ENCODE measurements at regions of chr7 and their contacts with region 1.

Region 1: DNA sequence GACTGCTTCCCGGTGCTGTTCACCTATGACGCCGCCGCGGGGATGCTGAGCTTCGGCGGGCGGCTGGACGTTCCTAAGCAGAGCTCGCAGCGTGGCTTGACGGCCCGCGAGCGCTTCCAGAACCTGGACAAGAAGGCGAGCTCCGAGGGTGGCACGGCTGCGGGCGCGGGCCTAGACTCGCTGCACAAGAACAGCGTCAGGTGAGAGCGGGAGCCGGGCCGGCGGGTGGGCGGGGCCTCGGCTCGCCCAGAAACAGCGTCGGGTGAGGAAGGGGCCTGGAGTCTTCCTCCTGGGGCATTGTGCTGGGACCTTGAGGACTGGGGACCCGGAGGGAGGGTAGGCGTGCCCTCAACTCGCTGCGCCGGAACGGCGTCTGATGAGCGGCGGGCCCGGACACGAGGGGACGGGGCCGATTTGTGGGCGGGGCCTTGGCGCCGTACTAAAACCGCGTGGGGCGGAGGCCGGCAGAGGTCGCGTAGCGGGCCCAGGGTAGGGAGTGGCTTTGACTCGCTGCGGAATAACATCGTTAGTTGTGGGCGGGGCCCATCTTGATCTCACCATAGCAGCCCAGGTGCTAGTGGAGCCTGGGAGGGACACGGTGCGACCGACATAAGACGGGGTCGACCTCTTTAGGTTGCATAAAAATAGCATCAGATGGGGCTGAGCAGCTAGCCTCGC is 15.6 kb downstream of the PDAP1 start:
- DNase-seq: peak; percentile 79
- H3K4me3 Mint-ChIP-seq: peak overlapping the region; percentile 63
- H3K27ac Mint-ChIP-seq: peak overlapping the region; percentile 85
- H3K4me1 Mint-ChIP-seq: peaks cover 20% of the 10 kb centered on the region
- H3K27me3 Mint-ChIP-seq: no peaks in the 10 kb centered on the region

Region 2: GRCh38 chr7:99374103-99375064 is 18.4 kb before region 1 on chr7 and contains the start of gene ARPC1B:
- CTCF ChIA-PET with region 1: no interaction called
- intact Hi-C with region 1: loop called (anchors 2 kb)
- DNase-seq: peak; percentile 88
- H3K4me3 Mint-ChIP-seq: peak within 1 kb of the TSS; percentile 79
- H3K27ac Mint-ChIP-seq: peak within 1 kb of the TSS; percentile 87
- H3K4me1 Mint-ChIP-seq: peaks cover 24% of the 10 kb centered on the region
- H3K27me3 Mint-ChIP-seq: no peaks in the 10 kb centered on the region
- total RNA-seq, gene ARPC1B: 334 to 345 TPM